GM12878 (cell line): ENCODE measurements at regions of chr10 and their contacts with region 1.

Region 1: DNA sequence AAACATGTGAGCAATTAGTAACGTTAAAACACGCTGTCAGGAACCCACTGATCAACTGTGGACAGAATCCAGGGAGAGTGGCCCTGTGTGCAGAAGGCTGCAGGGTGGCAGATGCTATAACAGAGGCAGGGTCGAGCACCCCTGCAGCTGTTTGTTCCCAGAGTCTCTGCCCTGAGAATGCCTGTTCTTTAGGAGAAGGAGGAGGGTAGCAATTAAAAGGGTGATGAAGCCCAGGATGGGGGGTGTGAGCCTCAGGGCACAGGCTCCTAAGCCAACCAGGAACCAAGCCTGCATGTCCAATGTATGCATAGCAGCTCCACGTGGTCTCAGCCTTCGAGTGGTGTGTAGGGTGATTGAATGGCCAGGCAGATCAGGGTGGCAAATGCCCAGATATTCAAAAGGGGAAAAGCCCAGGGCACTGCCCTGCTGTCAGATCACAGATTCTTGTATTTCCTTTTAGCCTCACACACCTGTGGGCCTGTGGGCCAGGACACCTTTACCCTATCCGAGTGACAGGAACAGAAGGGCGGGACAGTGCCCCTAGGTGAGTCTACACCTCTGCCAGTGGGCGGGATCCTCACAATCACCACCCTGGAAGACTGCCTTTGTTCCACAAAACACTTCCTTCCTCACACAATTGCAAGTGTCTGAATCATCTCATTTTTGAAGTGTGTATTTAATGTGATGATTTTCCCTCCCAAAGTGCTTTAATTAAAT is 7.3 kb downstream of the WDFY4 start:
- DNase-seq: no peak
- ATAC-seq: peak; percentile 7; the same call in 2 of the 3 replicates
- H3K4me3 ChIP-seq: no peak overlapping the region
- H3K27ac ChIP-seq: no peak overlapping the region
- H3K4me1 ChIP-seq: peaks cover 15% of the 10 kb centered on the region
- H3K27me3 ChIP-seq: no peaks in the 10 kb centered on the region
- CTCF ChIP-seq: no peak
- EP300 ChIP-seq: no peak
- POLR2A ChIP-seq: no peak
- RAD21 ChIP-seq: no peak

Region 2: DNA sequence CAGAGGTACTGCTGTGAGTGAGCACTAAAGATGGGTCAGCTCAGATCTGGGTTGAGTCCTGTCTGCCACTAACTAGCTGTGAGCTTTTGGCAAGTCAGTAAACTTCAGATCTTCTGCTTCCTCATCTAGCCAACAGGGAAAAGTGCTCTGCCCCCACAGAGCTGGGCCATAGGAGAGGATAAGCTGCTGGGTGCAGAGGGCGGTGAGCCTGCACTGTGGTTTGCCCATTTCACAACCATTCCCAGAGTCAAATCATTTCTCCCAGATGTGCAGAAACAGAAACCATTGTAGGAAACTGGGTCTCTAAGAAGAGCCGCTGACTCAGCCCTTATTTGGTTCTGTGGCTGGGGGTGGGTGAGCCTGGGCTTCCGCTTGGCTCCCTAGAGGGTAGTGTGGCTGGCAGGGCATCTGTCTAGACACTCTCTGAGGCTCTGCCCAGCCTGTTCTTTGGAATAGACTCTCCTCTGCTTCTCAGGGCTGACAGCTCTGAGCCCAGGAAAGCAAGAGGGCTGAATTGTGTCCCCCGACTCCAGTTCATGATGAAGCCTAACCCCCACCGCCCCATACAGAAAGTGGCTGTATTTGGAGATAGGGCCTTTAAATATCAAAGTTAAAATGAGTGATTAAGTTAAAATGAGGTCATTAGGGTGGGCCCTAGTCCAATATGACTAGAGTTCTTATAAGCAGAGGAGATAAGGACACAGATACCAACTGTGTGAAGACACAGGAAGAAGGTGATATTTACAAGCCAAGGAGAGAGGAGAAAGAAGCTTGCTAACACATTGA is 57.6 kb before region 1 on chr10:
- CTCF ChIA-PET with region 1: no interaction called
- POLR2A ChIA-PET with region 1: no interaction called
- RAD21 ChIA-PET with region 1: no interaction called
- SMC1A ChIA-PET with region 1: no interaction called
- in situ Hi-C with region 1: no loop called
- intact Hi-C with region 1: no loop called
- DNase-seq: peak; percentile 91
- ATAC-seq: peak; percentile 97
- H3K4me3 ChIP-seq: no peak overlapping the region
- H3K27ac ChIP-seq: peak overlapping the region; percentile 45
- H3K4me1 ChIP-seq: peaks cover 38% of the 10 kb centered on the region
- H3K27me3 ChIP-seq: no peaks in the 10 kb centered on the region
- CTCF ChIP-seq: no peak
- EP300 ChIP-seq: peak; percentile 35 to 41; a peak in 1 of 4 replicates
- POLR2A ChIP-seq: no peak
- RAD21 ChIP-seq: no peak

Region 3: DNA sequence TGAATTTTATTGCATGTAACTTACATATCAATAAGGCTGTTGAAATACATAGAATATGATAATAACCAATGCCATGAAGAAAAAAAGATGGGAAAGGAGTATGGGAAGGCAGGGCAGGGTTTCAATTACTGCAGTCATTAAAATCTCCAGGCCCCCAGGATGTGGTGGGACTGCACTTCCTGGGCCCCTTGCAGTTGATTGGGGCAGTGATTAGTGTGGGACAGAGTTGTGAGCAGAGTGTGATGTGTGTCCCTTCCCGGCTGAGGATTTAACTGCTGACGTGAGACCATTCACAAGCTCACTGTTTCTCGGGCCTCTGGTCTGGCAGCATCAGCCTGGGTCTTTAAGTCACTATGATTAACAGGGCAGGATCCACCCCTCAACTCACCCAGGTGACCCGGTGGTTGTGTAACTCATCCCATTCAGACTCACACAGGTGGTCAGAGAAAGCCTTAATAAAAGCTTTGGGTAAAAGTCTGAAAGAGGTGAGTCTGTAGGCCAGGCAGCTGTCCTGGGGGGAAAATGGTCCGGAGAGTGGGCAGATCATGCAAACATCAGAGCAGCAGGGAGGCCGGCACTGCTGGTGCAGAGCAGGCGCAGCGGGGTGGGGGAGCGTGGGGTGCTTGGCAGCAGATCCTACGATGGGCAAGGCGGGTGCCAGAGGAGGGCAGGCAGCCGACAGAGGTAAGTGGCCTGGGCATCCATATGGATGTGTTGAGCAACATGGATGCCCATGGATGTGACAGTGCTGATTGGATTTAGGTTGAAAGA is 43.6 kb before region 1 on chr10:
- CTCF ChIA-PET with region 1: no interaction called
- POLR2A ChIA-PET with region 1: no interaction called
- RAD21 ChIA-PET with region 1: no interaction called
- SMC1A ChIA-PET with region 1: no interaction called
- in situ Hi-C with region 1: no loop called
- intact Hi-C with region 1: no loop called
- DNase-seq: peak; percentile 52
- ATAC-seq: no peak; the same call in 1 of the 3 replicates
- H3K4me3 ChIP-seq: no peak overlapping the region
- H3K27ac ChIP-seq: no peak overlapping the region
- H3K4me1 ChIP-seq: peaks cover 7% of the 10 kb centered on the region; the same call in 1 of the 2 replicates
- H3K27me3 ChIP-seq: no peaks in the 10 kb centered on the region
- CTCF ChIP-seq: no peak
- EP300 ChIP-seq: no peak
- POLR2A ChIP-seq: no peak
- RAD21 ChIP-seq: no peak

Region 4: DNA sequence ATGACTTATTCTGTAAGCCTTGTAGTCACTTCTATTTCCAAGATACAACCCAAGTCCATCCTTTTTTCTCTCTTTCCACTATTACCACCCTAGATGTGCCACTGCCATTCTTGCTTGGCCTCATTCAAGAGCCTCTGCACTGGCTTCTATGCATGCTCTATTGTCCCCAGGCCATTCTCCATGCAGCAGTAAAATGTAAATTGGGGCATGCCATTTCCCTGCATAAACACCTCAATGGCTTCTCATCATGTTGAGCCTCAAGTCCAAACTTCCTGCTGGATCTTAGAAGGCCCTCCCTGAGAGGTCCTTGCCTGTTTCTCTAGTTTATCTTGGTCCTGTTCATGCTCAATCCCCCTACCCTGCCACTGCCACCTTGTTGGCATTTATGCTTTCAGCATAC is 30.5 kb before region 1 on chr10:
- CTCF ChIA-PET with region 1: interaction called, 221 read pairs
- POLR2A ChIA-PET with region 1: interaction called, 4 read pairs
- RAD21 ChIA-PET with region 1: interaction called, 12 read pairs
- SMC1A ChIA-PET with region 1: interaction called, 16 read pairs
- in situ Hi-C with region 1: loop called (anchors 5 kb)
- intact Hi-C with region 1: no loop called
- DNase-seq: no peak
- ATAC-seq: no peak
- H3K4me3 ChIP-seq: no peak overlapping the region
- H3K27ac ChIP-seq: no peak overlapping the region
- H3K4me1 ChIP-seq: no peaks in the 10 kb centered on the region
- H3K27me3 ChIP-seq: no peaks in the 10 kb centered on the region
- CTCF ChIP-seq: no peak
- EP300 ChIP-seq: no peak
- POLR2A ChIP-seq: no peak
- RAD21 ChIP-seq: no peak

Region 5: GRCh38 chr10:48708144-48708543 is 16.2 kb after region 1 on chr10:
- CTCF ChIA-PET with region 1: interaction called, 4 read pairs
- POLR2A ChIA-PET with region 1: interaction called, 3 read pairs
- RAD21 ChIA-PET with region 1: no interaction called
- SMC1A ChIA-PET with region 1: interaction called, 22 read pairs
- in situ Hi-C with region 1: no loop called
- intact Hi-C with region 1: no loop called
- DNase-seq: no peak
- ATAC-seq: no peak
- H3K4me3 ChIP-seq: no peak overlapping the region
- H3K27ac ChIP-seq: no peak overlapping the region
- H3K4me1 ChIP-seq: peaks cover 12% of the 10 kb centered on the region
- H3K27me3 ChIP-seq: no peaks in the 10 kb centered on the region
- CTCF ChIP-seq: no peak
- EP300 ChIP-seq: no peak
- POLR2A ChIP-seq: no peak
- RAD21 ChIP-seq: no peak

Region 6: DNA sequence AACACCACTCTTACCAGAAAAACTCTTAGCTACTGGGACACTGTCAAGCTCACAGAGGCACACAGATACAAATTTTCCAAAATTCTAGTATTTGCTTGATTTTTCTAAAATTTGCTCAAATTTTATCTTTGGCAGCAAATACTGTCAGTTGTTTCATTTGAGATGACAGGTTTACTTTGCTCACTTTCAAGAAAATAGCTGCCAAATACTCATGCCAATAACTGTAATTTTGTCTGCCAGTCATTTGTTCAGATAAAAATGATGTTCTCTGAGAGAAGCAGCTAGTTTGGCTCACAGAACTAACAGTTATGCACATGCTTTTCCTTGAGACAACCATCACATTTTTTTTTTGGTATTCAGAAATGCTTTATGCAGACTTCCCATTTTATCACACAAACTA is 164.9 kb after region 1 on chr10:
- CTCF ChIA-PET with region 1: no interaction called
- POLR2A ChIA-PET with region 1: no interaction called
- RAD21 ChIA-PET with region 1: no interaction called
- SMC1A ChIA-PET with region 1: no interaction called
- in situ Hi-C with region 1: no loop called
- intact Hi-C with region 1: no loop called
- DNase-seq: no peak
- ATAC-seq: no peak
- H3K4me3 ChIP-seq: no peak overlapping the region
- H3K27ac ChIP-seq: no peak overlapping the region
- H3K4me1 ChIP-seq: no peaks in the 10 kb centered on the region
- H3K27me3 ChIP-seq: no peaks in the 10 kb centered on the region
- CTCF ChIP-seq: no peak
- EP300 ChIP-seq: no peak
- POLR2A ChIP-seq: no peak
- RAD21 ChIP-seq: no peak